ENCODE measurements at regions of chr10 and their contacts with region 1.

Region 1: GRCh38 chr10:71270301-71271220 is 48.5 kb upstream of the SLC29A3 start:
- DNase-seq: no peak
- ATAC-seq: peak; percentile 63

Region 2: GRCh38 chr10:71212318-71213126 is 58.0 kb before region 1 on chr10 and contains the start of gene UNC5B:
- intact Hi-C with region 1: loop called (anchors 2 kb)
- DNase-seq: peak; percentile 94
- ATAC-seq: peak; percentile 88
- total RNA-seq, gene UNC5B: 4.1 TPM

Region 3: GRCh38 chr10:71232089-71232998 is 38.2 kb before region 1 on chr10:
- intact Hi-C with region 1: no loop called
- DNase-seq: no peak
- ATAC-seq: peak; percentile 47

Measured in sciatic nerve (tissue), 2 donors.